ENCODE measurements at regions of chr2 and their contacts with region 1.

Region 1: DNA sequence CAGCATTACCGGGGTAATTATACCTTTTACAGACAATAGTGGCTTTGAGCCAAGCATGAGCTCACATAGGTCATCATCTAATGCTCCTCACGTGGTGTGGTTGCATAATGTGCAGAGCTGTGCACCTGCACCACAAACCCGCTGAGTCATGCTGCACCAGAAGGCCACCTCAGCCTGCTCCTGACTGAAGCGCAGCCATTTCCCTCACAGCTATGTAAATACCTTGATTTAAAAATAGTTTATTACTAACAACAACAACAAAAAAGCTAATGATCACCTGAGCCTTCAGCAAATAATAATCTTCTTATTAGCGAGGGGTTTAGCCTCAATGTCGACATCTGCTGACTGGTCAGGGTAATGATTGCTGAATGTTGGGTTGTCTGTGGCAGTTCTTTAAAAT is 238.8 kb downstream of the MBD5 start:
- DNase-seq: no peak
- H3K4me3 Mint-ChIP-seq: no peak overlapping the region
- H3K27ac Mint-ChIP-seq: no peak overlapping the region
- H3K4me1 Mint-ChIP-seq: no peaks in the 10 kb centered on the region
- H3K27me3 Mint-ChIP-seq: no peaks in the 10 kb centered on the region

Region 2: DNA sequence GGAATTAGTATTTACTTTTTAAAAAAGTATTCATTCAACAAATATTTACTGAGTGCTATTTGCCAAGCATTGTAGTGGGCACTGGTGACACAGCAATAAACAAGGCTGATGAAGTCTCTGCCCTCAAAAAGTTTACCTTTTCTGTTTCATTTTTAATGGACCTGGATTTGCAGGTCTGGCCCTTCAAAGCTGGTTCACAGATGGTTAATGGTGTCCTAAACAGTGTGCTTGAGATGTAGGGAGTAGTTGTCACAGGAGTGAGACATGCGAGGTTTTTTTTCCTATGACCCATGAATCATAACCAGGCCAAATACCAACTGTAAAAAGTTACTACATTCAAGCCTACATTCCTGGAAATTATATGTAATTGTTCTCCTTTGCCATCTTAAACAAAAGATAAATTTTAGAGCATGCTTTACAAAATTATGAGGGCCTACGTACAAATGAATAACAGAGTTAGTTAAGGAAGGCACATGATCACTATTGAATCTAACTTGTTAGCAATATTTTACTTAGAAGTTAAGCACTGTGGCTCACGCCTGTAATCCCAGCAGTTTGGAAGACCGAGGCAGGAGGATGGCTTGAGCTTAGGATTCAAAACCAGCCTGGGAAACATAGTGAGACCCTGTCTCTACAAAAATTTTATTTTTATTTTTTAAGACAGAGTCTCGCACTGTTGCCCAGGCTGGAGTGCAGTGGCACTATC is 14.9 kb before region 1 on chr2:
- CTCF ChIA-PET with region 1: no interaction called
- intact Hi-C with region 1: no loop called
- DNase-seq: no peak
- H3K4me3 Mint-ChIP-seq: no peak overlapping the region
- H3K27ac Mint-ChIP-seq: no peak overlapping the region
- H3K4me1 Mint-ChIP-seq: no peaks in the 10 kb centered on the region
- H3K27me3 Mint-ChIP-seq: no peaks in the 10 kb centered on the region

Region 3: GRCh38 chr2:148273158-148273691 is 13.6 kb after region 1 on chr2:
- CTCF ChIA-PET with region 1: no interaction called
- intact Hi-C with region 1: loop called (anchors 2 kb)
- DNase-seq: no peak
- H3K4me3 Mint-ChIP-seq: no peak overlapping the region
- H3K27ac Mint-ChIP-seq: no peak overlapping the region
- H3K4me1 Mint-ChIP-seq: no peaks in the 10 kb centered on the region
- H3K27me3 Mint-ChIP-seq: no peaks in the 10 kb centered on the region

Measured in activated naive CD4-positive, alpha-beta T cell treated with anti-CD3 and anti-CD28 coated beads for 36 hours (primary cell).